ENCODE measurements at regions of chr3 and their contacts with region 1.

Region 1: GRCh38 chr3:45119824-45120614 is 26.2 kb downstream of the CDCP1 start:
- DNase-seq: no peak
- ATAC-seq: no peak
- H3K4me3 ChIP-seq: no peak overlapping the region
- H3K4me3 Mint-ChIP-seq: no peak overlapping the region
- H3K27ac ChIP-seq: no peak overlapping the region
- H3K27ac Mint-ChIP-seq: no peak overlapping the region
- H3K4me1 ChIP-seq: peaks cover 22% of the 10 kb centered on the region
- H3K4me1 Mint-ChIP-seq: peaks cover 22% of the 10 kb centered on the region
- H3K27me3 ChIP-seq: peaks cover 3 to 4% of the 10 kb centered on the region in 2 experiments
- H3K27me3 Mint-ChIP-seq: peaks cover 12% of the 10 kb centered on the region
- CTCF ChIP-seq: no peak

Region 2: GRCh38 chr3:45084820-45085816 is 34.9 kb before region 1 on chr3:
- CTCF ChIA-PET with region 1: no interaction called
- POLR2A ChIA-PET with region 1: no interaction called
- intact Hi-C with region 1: no loop called
- DNase-seq: no peak
- ATAC-seq: no peak
- H3K4me3 ChIP-seq: no peak overlapping the region
- H3K4me3 Mint-ChIP-seq: no peak overlapping the region
- H3K27ac ChIP-seq: no peak overlapping the region
- H3K27ac Mint-ChIP-seq: no peak overlapping the region
- H3K4me1 ChIP-seq: no peaks in the 10 kb centered on the region
- H3K4me1 Mint-ChIP-seq: no peaks in the 10 kb centered on the region
- H3K27me3 ChIP-seq: no peaks in the 10 kb centered on the region
- H3K27me3 Mint-ChIP-seq: peaks cover 8% of the 10 kb centered on the region
- CTCF ChIP-seq: no peak

Region 3: GRCh38 chr3:45105855-45106671 is 14.0 kb before region 1 on chr3:
- CTCF ChIA-PET with region 1: interaction called, 4 read pairs
- POLR2A ChIA-PET with region 1: interaction called, 11 read pairs
- intact Hi-C with region 1: no loop called
- DNase-seq: peak; percentile 18 to 77 (median 64)
- ATAC-seq: peak; percentile 74
- H3K4me3 ChIP-seq: no peak overlapping the region
- H3K4me3 Mint-ChIP-seq: peak overlapping the region; percentile 2
- H3K27ac ChIP-seq: no peak overlapping the region
- H3K27ac Mint-ChIP-seq: no peak overlapping the region
- H3K4me1 ChIP-seq: peaks cover 60% of the 10 kb centered on the region
- H3K4me1 Mint-ChIP-seq: peaks cover 66% of the 10 kb centered on the region
- H3K27me3 ChIP-seq: peaks cover 0 to 16% of the 10 kb centered on the region in 2 experiments
- H3K27me3 Mint-ChIP-seq: peaks cover 15% of the 10 kb centered on the region
- CTCF ChIP-seq: no peak

Region 4: DNA sequence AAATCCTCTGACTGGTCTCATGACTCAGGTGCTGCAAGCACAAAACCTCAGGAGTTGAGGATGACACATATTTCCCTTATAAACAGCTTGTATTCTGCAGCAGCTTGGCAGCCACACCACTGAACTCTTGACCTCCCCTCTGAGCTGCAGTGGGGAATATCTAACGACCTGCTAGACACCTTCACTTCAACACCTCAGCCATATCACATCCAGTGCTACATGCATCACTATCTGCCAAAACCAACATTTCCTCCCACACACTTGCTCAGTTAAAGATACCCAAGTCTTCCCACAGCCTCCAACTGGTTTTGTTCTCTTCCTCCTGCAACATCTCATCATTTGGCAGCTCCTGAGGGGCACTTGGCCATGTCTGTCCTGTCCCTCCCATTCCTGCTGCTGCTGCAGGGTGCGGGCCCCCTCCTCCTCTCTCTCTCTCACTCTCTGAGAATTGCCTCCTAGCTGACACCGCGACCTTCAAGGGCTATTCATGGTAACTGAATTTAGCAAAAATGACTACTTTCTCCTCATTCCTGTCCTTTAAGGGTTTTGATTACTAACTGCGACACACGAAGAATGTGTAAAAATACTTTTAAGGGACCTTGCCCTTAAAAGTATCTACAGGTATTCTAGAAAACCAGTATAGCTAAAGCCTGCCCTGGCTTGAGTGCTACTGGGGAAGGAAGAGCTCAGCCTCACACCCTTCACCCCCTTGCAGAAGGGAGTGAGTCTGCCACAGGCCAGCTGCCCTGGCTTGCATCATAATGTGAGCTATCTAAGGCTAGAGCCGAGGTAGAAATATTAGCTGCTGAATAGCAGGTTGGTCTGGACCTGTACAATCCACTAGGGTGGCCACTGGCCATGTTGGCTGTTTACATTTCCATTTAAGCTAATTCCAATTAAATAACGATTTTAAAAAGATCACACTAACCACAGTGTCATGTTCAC is 761.3 kb after region 1 on chr3:
- CTCF ChIA-PET with region 1: no interaction called
- POLR2A ChIA-PET with region 1: no interaction called
- intact Hi-C with region 1: no loop called
- DNase-seq: peak in 8 of 9 experiments; percentile 20 to 84 (median 54)
- ATAC-seq: peak; percentile 88
- H3K4me3 ChIP-seq: no peak overlapping the region
- H3K4me3 Mint-ChIP-seq: no peak overlapping the region
- H3K27ac ChIP-seq: no peak overlapping the region
- H3K27ac Mint-ChIP-seq: peak overlapping the region; percentile 69
- H3K4me1 ChIP-seq: peaks cover 11% of the 10 kb centered on the region
- H3K4me1 Mint-ChIP-seq: peaks cover 25% of the 10 kb centered on the region
- H3K27me3 ChIP-seq: no peaks in the 10 kb centered on the region
- H3K27me3 Mint-ChIP-seq: peaks cover 12% of the 10 kb centered on the region
- CTCF ChIP-seq: no peak